Activated T-helper 1 cell treated with anti-CD3 and anti-CD28 coated beads, Interleukin-12 subunit alpha, Interleukin-12 subunit beta, Interleukin-2, Interleukin-4 antibody, amounts not matched to agents 30 ng/mL and 10 ng/mL and 1 ng/mL, durations not matched to agents 14 hours and 24 hours and 36 hours (primary cell): ENCODE measurements at regions of chr7 and their contacts with region 1.

Region 1: GRCh38 chr7:6323967-6324701 is 51.7 kb upstream of the CYTH3 start:
- DNase-seq: no peak
- H3K4me3 Mint-ChIP-seq: no peak overlapping the region
- H3K27ac Mint-ChIP-seq: no peak overlapping the region
- H3K4me1 Mint-ChIP-seq: peaks cover 5% of the 10 kb centered on the region
- H3K27me3 Mint-ChIP-seq: no peaks in the 10 kb centered on the region

Region 2: GRCh38 chr7:5854738-5855137 is 469.4 kb before region 1 on chr7:
- intact Hi-C with region 1: loop called (anchors 2 kb)
- DNase-seq: no peak
- H3K4me3 Mint-ChIP-seq: no peak overlapping the region
- H3K27ac Mint-ChIP-seq: no peak overlapping the region
- H3K4me1 Mint-ChIP-seq: peaks cover 6% of the 10 kb centered on the region
- H3K27me3 Mint-ChIP-seq: no peaks in the 10 kb centered on the region

Region 3: GRCh38 chr7:5997222-5997808 is 326.8 kb before region 1 on chr7:
- intact Hi-C with region 1: loop called (anchors 1 kb)
- DNase-seq: no peak
- H3K4me3 Mint-ChIP-seq: no peak overlapping the region
- H3K27ac Mint-ChIP-seq: no peak overlapping the region
- H3K4me1 Mint-ChIP-seq: no peaks in the 10 kb centered on the region
- H3K27me3 Mint-ChIP-seq: no peaks in the 10 kb centered on the region

Region 4: GRCh38 chr7:6160191-6160623 is 163.9 kb before region 1 on chr7:
- intact Hi-C with region 1: loop called (anchors 1 kb)
- DNase-seq: no peak
- H3K4me3 Mint-ChIP-seq: no peak overlapping the region
- H3K27ac Mint-ChIP-seq: no peak overlapping the region
- H3K4me1 Mint-ChIP-seq: peaks cover 5% of the 10 kb centered on the region
- H3K27me3 Mint-ChIP-seq: no peaks in the 10 kb centered on the region

Region 5: DNA sequence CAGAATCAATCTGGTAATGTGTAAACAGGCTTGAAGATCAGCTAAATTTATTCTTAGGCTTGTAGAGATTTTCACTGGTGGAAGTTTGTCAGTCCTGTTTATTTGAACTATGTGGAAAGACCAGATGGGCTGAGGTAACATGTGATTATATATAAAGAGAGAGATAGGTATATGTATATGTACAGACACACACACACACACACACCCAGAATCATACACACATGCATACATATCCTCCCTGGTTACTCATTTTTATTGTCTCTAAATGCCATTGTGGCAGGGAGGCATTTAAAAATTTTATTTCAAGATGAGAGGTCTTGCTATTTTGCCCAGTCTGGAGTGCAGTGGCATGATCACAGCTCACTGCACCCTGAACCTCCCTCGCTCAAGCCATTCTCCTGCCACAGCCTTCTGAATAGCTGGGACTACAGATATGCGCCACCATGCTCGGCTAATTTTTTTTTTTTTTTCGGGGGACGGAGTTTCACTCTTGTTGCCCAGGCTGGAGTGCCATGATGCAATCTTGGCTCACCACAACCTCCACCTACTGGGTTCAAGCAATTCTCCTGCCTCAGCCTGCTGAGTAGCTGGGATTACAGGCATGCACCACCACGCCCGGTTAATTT is 26.4 kb after region 1 on chr7:
- intact Hi-C with region 1: no loop called
- DNase-seq: no peak
- H3K4me3 Mint-ChIP-seq: no peak overlapping the region
- H3K27ac Mint-ChIP-seq: no peak overlapping the region
- H3K4me1 Mint-ChIP-seq: no peaks in the 10 kb centered on the region
- H3K27me3 Mint-ChIP-seq: peaks cover 3% of the 10 kb centered on the region